GM13977 (cell line): ENCODE measurements at regions of chr9 and their contacts with region 1.

Region 1: GRCh38 chr9:130712564-130713285 is 19.1 kb downstream of the EXOSC2 start:
- DNase-seq: peak; percentile 97
- CTCF ChIP-seq: no peak

Region 2: GRCh38 chr9:130467371-130467770 is 245.4 kb before region 1 on chr9:
- in situ Hi-C with region 1: no loop called
- DNase-seq: no peak
- CTCF ChIP-seq: no peak

Region 3: GRCh38 chr9:130770679-130771442 is 58.1 kb after region 1 on chr9:
- in situ Hi-C with region 1: loop called (anchors 10 kb)
- DNase-seq: peak; percentile 63
- CTCF ChIP-seq: peak; percentile 59

Region 4: GRCh38 chr9:130857864-130858738 is 145.4 kb after region 1 on chr9:
- in situ Hi-C with region 1: loop called (anchors 10 kb)
- DNase-seq: no peak
- CTCF ChIP-seq: no peak

Region 5: GRCh38 chr9:131046581-131047202 is 334.0 kb after region 1 on chr9:
- in situ Hi-C with region 1: loop called (anchors 25 kb)
- DNase-seq: peak; percentile 83
- CTCF ChIP-seq: peak; percentile 99